Prostate gland (tissue), 2 donors: ENCODE measurements at regions of chr10 and their contacts with region 1.

Region 1: GRCh38 chr10:97640174-97640867 is at the start of gene PI4K2A:
- DNase-seq: peak; percentile 99
- H3K4me3 ChIP-seq: peak within 1 kb of the TSS; percentile 53 to 72
- H3K27ac ChIP-seq: peak within 1 kb of the TSS; percentile 56 to 78
- H3K4me1 ChIP-seq: no peaks in the 10 kb centered on the region
- H3K27me3 ChIP-seq: no peaks in the 10 kb centered on the region
- CTCF ChIP-seq: no peak
- POLR2A ChIP-seq: peak; percentile 91
- total RNA-seq, gene PI4K2A: 12.3 to 26.2 TPM

Region 2: GRCh38 chr10:97686962-97687784 is 46.9 kb after region 1 on chr10 and contains the start of gene AVPI1:
- intact Hi-C with region 1: loop called (anchors 5 kb)
- DNase-seq: peak; percentile 98
- H3K4me3 ChIP-seq: peak within 1 kb of the TSS; percentile 51 to 64
- H3K27ac ChIP-seq: peak within 1 kb of the TSS; percentile 90 to 93
- H3K4me1 ChIP-seq: peaks cover 18% of the 10 kb centered on the region
- H3K27me3 ChIP-seq: no peaks in the 10 kb centered on the region
- CTCF ChIP-seq: peak in 1 of 4 experiments; percentile 17
- POLR2A ChIP-seq: peak; percentile 100
- total RNA-seq, gene AVPI1: 17.0 to 28.6 TPM